Dorsolateral prefrontal cortex (tissue), 120 donors: ENCODE measurements at regions of chr3 and their contacts with region 1.

Region 1: GRCh38 chr3:149717391-149718056 is 34.8 kb downstream of the COMMD2 start:
- DNase-seq: peak in 3 of 10 donors; percentile 35 to 69 (median 41)
- H3K4me3 ChIP-seq: peak overlapping the region in 22 of 59 donors; percentile 1 to 44 (median 25)
- H3K27ac ChIP-seq: no peak overlapping the region
- H3K27me3 ChIP-seq: no peaks in the 10 kb centered on the region
- CTCF ChIP-seq: peak; percentile 67 to 95 (median 84)

Region 2: DNA sequence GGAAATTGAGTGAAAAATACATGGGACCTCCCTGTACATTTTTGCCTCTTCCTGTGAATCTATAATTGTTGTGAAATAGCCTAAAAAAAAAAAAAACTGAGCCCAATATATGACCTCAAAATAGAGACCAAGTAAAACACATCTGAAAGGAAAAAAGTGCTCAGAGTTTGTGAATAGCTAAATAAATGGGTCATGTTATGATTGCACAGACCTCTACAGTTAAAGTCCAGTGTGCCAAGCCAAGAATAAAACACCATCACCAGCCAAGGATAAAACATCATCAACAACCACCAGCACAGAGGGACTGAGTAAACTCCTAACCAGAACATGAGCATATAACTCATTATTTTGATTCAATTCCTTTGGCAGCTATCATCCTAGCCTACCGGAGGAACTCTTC is 1135.4 kb before region 1 on chr3:
- intact Hi-C with region 1: no loop called
- DNase-seq: no peak
- H3K4me3 ChIP-seq: no peak overlapping the region
- H3K27ac ChIP-seq: no peak overlapping the region
- H3K27me3 ChIP-seq: no peaks in the 10 kb centered on the region
- CTCF ChIP-seq: no peak

Region 3: GRCh38 chr3:149512209-149512782 is 205.2 kb before region 1 on chr3:
- intact Hi-C with region 1: loop called (anchors 5 kb)
- DNase-seq: peak; percentile 39 to 75 (median 60)
- H3K4me3 ChIP-seq: peak overlapping the region in 26 of 59 donors; percentile 4 to 55 (median 32)
- H3K27ac ChIP-seq: no peak overlapping the region
- H3K27me3 ChIP-seq: no peaks in the 10 kb centered on the region
- CTCF ChIP-seq: peak; percentile 55 to 93 (median 82)

Region 4: DNA sequence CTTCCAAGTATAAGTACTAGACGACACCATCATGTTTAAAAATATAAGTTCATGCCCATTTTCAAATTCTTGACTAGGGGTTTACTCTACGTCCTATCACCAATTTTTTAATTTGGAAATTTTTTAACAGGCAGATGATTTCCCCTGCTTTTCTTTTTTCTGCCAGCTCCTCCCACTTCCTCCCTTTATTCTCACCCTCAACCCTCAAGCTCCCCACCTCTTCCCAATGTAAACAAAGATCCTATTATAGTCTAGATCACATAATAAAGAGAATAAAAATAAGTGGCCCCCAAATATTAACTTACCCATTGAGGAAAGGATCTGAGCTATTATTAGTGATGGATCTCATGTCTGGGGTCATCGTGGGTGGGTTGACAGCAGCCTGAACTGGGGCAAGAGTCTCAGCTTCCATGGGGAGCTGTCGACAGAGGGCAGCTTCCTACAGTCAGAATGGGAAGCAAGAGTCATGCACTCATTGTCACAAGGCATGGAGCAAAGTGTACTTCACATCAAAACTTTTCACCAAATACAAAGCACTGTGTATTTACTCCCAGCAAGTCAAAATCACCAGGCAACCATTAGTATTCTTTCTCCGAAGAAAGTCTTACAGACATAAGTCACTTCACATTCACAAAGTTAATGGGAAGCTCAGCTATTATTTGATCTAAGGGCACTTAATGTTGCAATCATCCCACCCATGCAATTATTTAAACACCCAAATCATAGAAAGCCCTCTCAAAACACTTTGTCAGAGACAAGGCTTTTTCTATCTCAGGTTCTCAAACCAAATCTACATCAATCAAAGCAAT is 189.8 kb before region 1 on chr3:
- intact Hi-C with region 1: loop called (anchors 5 kb)
- DNase-seq: no peak
- H3K4me3 ChIP-seq: no peak overlapping the region
- H3K27ac ChIP-seq: peak overlapping the region in 3 of 59 donors; percentile 18 to 41 (median 23)
- H3K27me3 ChIP-seq: peaks cover 0 to 4% (median 0%) of the 10 kb centered on the region in 45 donors
- CTCF ChIP-seq: peak in 44 of 56 donors; percentile 12 to 66 (median 36)

Region 5: DNA sequence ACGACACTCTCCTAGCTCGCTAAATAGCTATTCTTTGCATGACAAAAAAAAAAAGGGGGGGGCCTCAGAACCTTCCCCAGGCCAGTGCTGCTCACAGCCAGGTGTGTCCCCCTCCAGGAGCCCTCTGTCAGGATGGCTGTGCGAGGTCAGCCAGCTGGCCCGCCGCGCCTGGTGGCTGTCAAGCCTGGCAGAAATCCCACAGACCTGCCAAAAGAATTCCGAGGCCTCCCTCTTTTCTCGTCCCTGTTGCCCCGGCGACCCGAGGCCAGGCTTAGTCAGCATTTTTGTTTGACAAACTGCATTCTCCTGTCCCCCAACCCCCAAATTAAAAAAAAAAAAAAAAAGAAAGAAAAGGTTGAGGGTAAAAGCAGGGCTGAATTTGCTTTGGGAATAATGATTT is 181.1 kb before region 1 on chr3:
- intact Hi-C with region 1: loop called in 1 of 2 experiments (anchors 5 kb)
- DNase-seq: peak in 3 of 10 donors; percentile 37 to 52 (median 44)
- H3K4me3 ChIP-seq: peak overlapping the region in 1 of 59 donors; percentile 5
- H3K27ac ChIP-seq: no peak overlapping the region
- H3K27me3 ChIP-seq: no peaks in the 10 kb centered on the region
- CTCF ChIP-seq: no peak